Body of pancreas (tissue), 4 donors: ENCODE measurements at regions of chr9 and their contacts with region 1.

Region 1: GRCh38 chr9:88593537-88594185 is 58.7 kb downstream of the NXNL2 start:
- DNase-seq: peak; percentile 54 to 71 (median 69)
- ATAC-seq: no peak
- H3K4me3 ChIP-seq: no peak overlapping the region
- H3K27ac ChIP-seq: no peak overlapping the region
- H3K4me1 ChIP-seq: no peaks in the 10 kb centered on the region
- H3K27me3 ChIP-seq: no peaks in the 10 kb centered on the region
- CTCF ChIP-seq: peak; percentile 20 to 77 (median 59)
- POLR2A ChIP-seq: no peak

Region 2: GRCh38 chr9:89000973-89001916 is 407.6 kb after region 1 on chr9:
- intact Hi-C with region 1: loop called (anchors 5 kb)
- DNase-seq: peak; percentile 90 to 94 (median 93)
- ATAC-seq: peak; percentile 72
- H3K4me3 ChIP-seq: no peak overlapping the region
- H3K27ac ChIP-seq: peak overlapping the region in 1 of 4 donors; percentile 3
- H3K4me1 ChIP-seq: peaks cover 28% of the 10 kb centered on the region
- H3K27me3 ChIP-seq: no peaks in the 10 kb centered on the region
- CTCF ChIP-seq: peak; percentile 71 to 93 (median 84)
- POLR2A ChIP-seq: no peak